Left lung (tissue), 14 donors: ENCODE measurements at regions of chr2 and their contacts with region 1.

Region 1: DNA sequence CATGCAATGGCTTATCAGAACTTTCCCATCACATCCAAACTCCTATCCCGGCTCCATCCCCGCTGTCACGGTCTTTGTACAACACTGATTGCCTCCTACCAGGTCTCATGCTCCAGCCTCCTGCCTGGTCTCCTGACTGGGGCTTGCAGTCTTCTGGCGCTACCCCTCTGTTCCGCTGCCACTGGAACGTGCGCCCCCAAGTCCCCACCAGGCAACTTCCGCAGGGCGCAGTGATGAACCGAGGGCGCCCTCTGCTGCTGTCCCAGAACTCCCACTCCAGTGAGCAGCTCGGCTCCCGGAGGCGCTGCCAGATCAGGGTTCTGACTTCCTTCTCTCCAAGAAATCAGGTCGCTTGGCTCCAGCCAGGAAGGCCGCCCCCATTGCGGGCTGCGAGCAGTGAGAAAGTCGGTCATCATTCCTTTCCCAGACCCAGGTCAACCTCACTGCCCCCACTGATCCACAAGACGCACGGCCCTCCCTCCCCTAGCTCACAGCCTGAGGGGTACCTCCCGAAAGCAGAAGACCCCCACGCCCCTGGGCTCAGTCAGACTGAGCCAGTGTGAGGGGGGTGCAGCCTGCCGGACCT is 43.9 kb upstream of the RAB11FIP5 start:
- DNase-seq: peak in 3 of 4 donors; percentile 52 to 85 (median 55)
- ATAC-seq: peak; percentile 90
- H3K4me3 ChIP-seq: no peak overlapping the region
- H3K27ac ChIP-seq: no peak overlapping the region
- H3K4me1 ChIP-seq: no peaks in the 10 kb centered on the region
- H3K27me3 ChIP-seq: peaks cover 0 to 42% of the 10 kb centered on the region in 2 donors
- CTCF ChIP-seq: peak; percentile 30 to 52

Region 2: GRCh38 chr2:73080711-73081131 is 75.9 kb before region 1 on chr2:
- intact Hi-C with region 1: loop called in 1 of 2 experiments (anchors 5 kb)
- DNase-seq: no peak
- ATAC-seq: no peak
- H3K4me3 ChIP-seq: no peak overlapping the region
- H3K27ac ChIP-seq: no peak overlapping the region
- H3K4me1 ChIP-seq: no peaks in the 10 kb centered on the region
- H3K27me3 ChIP-seq: no peaks in the 10 kb centered on the region
- CTCF ChIP-seq: no peak